A673 (cell line): ENCODE measurements at regions of chr2 and their contacts with region 1.

Region 1: GRCh38 chr2:135913727-135914365 is 37.6 kb upstream of the MCM6 start:
- DNase-seq: peak; percentile 57
- H3K4me3 ChIP-seq: no peak overlapping the region
- H3K27ac ChIP-seq: no peak overlapping the region
- H3K4me1 ChIP-seq: no peaks in the 10 kb centered on the region
- H3K27me3 ChIP-seq: no peaks in the 10 kb centered on the region
- CTCF ChIP-seq: peak; percentile 82

Region 2: GRCh38 chr2:136378712-136379595 is 465.1 kb after region 1 on chr2:
- CTCF ChIA-PET with region 1: interaction called, 13 read pairs
- POLR2A ChIA-PET with region 1: no interaction called
- intact Hi-C with region 1: loop called (anchors 1 kb)
- DNase-seq: peak; percentile 54
- H3K4me3 ChIP-seq: no peak overlapping the region
- H3K27ac ChIP-seq: no peak overlapping the region
- H3K4me1 ChIP-seq: no peaks in the 10 kb centered on the region
- H3K27me3 ChIP-seq: no peaks in the 10 kb centered on the region
- CTCF ChIP-seq: peak; percentile 71

Region 3: DNA sequence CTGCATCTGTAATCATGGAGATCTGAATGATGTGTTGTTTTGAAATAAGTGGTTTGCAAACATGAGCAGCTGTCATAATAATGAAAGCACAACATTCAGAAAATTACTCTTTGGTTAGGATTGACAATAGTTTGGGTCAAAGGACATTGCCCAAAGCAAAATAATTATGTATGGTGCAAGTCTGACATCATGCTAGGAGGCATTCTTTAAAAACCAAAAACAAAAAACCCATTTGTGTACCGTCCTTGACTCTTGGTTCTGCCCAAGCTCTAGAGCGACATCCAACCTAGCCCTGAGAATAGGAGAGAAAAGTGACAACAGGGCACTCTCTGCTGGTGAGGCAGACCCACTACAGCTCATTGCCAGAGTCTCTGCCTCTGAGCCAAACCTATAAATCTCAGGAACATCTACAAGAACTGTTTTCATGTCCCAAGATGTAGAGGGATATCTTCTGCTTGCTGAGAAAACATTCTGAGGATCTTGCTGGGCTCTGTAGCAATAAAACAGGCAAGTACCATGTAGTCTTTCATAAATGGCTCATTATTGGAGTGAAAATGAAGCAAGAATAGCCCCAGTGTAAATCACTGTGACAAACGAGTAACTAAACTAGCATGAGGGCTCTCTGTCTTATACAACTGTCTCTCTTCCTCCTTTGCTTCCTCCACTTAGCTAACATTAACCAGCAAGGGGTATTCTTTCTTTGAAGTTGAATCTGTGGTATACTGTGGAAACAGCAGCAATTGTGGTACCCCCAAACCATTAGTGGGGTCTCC is 470.9 kb after region 1 on chr2:
- CTCF ChIA-PET with region 1: interaction called, 13 read pairs
- POLR2A ChIA-PET with region 1: no interaction called
- intact Hi-C with region 1: loop called (anchors 2 kb)
- DNase-seq: peak; percentile 54
- H3K4me3 ChIP-seq: no peak overlapping the region
- H3K27ac ChIP-seq: no peak overlapping the region
- H3K4me1 ChIP-seq: no peaks in the 10 kb centered on the region
- H3K27me3 ChIP-seq: no peaks in the 10 kb centered on the region
- CTCF ChIP-seq: peak; percentile 67